ENCODE measurements at regions of chr14 and their contacts with region 1.

Region 1: GRCh38 chr14:69648477-69649451 is 37.4 kb downstream of the SUSD6 start:
- DNase-seq: no peak
- H3K4me3 Mint-ChIP-seq: peak overlapping the region; percentile 35
- H3K27ac Mint-ChIP-seq: peak overlapping the region; percentile 65
- H3K4me1 Mint-ChIP-seq: peaks cover 92% of the 10 kb centered on the region
- H3K27me3 Mint-ChIP-seq: no peaks in the 10 kb centered on the region

Region 2: GRCh38 chr14:69660344-69661193 is 11.8 kb after region 1 on chr14:
- intact Hi-C with region 1: loop called (anchors 1 kb)
- DNase-seq: no peak
- H3K4me3 Mint-ChIP-seq: peak overlapping the region; percentile 43
- H3K27ac Mint-ChIP-seq: peak overlapping the region; percentile 85
- H3K4me1 Mint-ChIP-seq: peaks cover 87% of the 10 kb centered on the region
- H3K27me3 Mint-ChIP-seq: no peaks in the 10 kb centered on the region

Region 3: DNA sequence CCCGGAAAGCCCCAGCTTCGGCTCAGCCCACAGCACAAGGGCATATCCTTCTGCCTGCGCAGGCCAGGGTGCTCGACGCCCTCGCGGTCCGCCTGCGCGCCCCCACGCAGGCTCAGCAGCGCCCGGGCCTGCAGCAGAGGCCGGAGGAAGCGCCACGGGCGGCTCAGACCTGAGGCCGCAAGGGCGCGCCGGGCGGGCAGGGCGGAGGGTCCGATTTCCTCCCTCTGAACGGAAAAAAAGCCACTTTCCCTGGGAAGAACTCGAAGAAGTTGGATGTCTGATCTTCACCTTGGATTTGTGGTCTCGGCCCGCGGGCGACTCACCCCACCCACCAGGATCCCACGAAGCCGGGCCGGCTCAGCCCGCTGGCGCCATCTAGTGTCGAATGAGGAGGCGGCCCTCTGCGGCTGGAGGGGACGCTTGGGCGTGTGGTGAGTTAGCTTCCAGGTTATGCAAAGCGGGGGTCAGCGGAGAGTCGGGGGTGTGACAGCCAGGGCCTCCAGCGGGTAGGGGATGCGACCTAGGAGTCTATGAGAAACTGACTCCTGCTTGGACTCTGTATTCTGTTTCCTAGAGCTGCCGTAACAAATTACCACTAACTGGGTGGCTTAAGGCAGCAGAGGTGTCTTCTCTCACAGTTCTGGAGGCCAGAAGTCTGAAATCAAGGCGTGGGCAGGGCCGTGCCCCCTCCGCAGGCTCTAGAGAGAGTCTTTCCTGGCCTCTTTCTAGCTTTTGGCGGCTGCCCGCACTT is 78.2 kb after region 1 on chr14:
- intact Hi-C with region 1: no loop called
- DNase-seq: peak; percentile 76
- H3K4me3 Mint-ChIP-seq: peak overlapping the region; percentile 72
- H3K27ac Mint-ChIP-seq: peak overlapping the region; percentile 74
- H3K4me1 Mint-ChIP-seq: peaks cover 38% of the 10 kb centered on the region
- H3K27me3 Mint-ChIP-seq: no peaks in the 10 kb centered on the region